HCT116 (cell line): ENCODE measurements at regions of chr15 and their contacts with region 1.

Region 1: GRCh38 chr15:81400640-81401236 is 26.7 kb upstream of the TMC3 start:
- DNase-seq: peak; percentile 52
- ATAC-seq: peak; percentile 67
- H3K4me3 ChIP-seq: no peak overlapping the region
- H3K27ac ChIP-seq: no peak overlapping the region
- H3K4me1 ChIP-seq: no peaks in the 10 kb centered on the region
- H3K27me3 ChIP-seq: no peaks in the 10 kb centered on the region
- CTCF ChIP-seq: peak; percentile 57 to 79 (median 67)
- POLR2A ChIP-seq: no peak
- RAD21 ChIP-seq: peak; percentile 85

Region 2: GRCh38 chr15:81015621-81016488 is 384.9 kb before region 1 on chr15:
- CTCF ChIA-PET with region 1: no interaction called
- POLR2A ChIA-PET with region 1: no interaction called
- RAD21 ChIA-PET with region 1: no interaction called
- intact Hi-C with region 1: no loop called
- DNase-seq: no peak
- ATAC-seq: no peak
- H3K4me3 ChIP-seq: no peak overlapping the region
- H3K27ac ChIP-seq: no peak overlapping the region
- H3K4me1 ChIP-seq: peaks cover 0 to 4% of the 10 kb centered on the region in 2 experiments; a peak in 1 of 4 replicates
- H3K27me3 ChIP-seq: no peaks in the 10 kb centered on the region
- CTCF ChIP-seq: no peak
- POLR2A ChIP-seq: no peak
- RAD21 ChIP-seq: no peak

Region 3: GRCh38 chr15:81336568-81336967 is 64.2 kb before region 1 on chr15:
- CTCF ChIA-PET with region 1: no interaction called
- POLR2A ChIA-PET with region 1: no interaction called
- RAD21 ChIA-PET with region 1: interaction called in 1 of 2 experiments, 3 read pairs
- intact Hi-C with region 1: loop called (anchors 1 kb)
- DNase-seq: peak; percentile 3
- ATAC-seq: peak; percentile 80
- H3K4me3 ChIP-seq: no peak overlapping the region
- H3K27ac ChIP-seq: no peak overlapping the region
- H3K4me1 ChIP-seq: peaks cover 15 to 16% of the 10 kb centered on the region in 2 experiments
- H3K27me3 ChIP-seq: no peaks in the 10 kb centered on the region
- CTCF ChIP-seq: peak; percentile 48 to 59 (median 59); a peak in 5 of 6 replicates
- POLR2A ChIP-seq: no peak
- RAD21 ChIP-seq: peak; percentile 73

Region 4: GRCh38 chr15:81469154-81469553 is 68.4 kb after region 1 on chr15:
- CTCF ChIA-PET with region 1: no interaction called
- POLR2A ChIA-PET with region 1: no interaction called
- RAD21 ChIA-PET with region 1: no interaction called
- intact Hi-C with region 1: no loop called
- DNase-seq: no peak
- ATAC-seq: no peak
- H3K4me3 ChIP-seq: no peak overlapping the region
- H3K27ac ChIP-seq: no peak overlapping the region
- H3K4me1 ChIP-seq: no peaks in the 10 kb centered on the region
- H3K27me3 ChIP-seq: peaks cover 35% of the 10 kb centered on the region; the same call in 1 of the 2 replicates
- CTCF ChIP-seq: no peak
- POLR2A ChIP-seq: no peak
- RAD21 ChIP-seq: no peak